ENCODE measurements at regions of chr20 and their contacts with region 1.

Region 1: GRCh38 chr20:39592371-39592770 is 630.2 kb downstream of the DHX35 start:
- DNase-seq: no peak
- ATAC-seq: no peak
- H3K4me3 Mint-ChIP-seq: no peak overlapping the region
- H3K27ac Mint-ChIP-seq: no peak overlapping the region
- H3K4me1 Mint-ChIP-seq: no peaks in the 10 kb centered on the region
- H3K27me3 Mint-ChIP-seq: peaks cover 8% of the 10 kb centered on the region

Region 2: DNA sequence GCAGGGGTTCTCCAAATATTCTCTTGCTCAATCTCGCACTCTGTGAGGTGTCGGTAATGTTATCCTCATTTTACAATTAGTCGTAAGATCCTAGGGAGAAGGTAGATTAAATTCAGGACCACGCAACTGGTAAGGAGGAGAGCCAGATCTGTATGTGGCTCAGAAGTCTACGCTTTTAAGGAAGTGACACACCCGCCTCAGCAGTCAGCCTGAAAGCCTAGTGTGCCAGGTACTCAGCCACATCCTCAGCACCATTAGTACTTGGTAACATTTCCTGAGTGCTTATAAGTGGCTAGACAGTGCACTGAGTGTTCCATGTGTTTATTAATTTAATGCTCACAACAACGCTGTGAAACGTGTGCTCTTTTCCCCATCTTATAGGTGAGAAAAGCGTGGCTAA is 566.5 kb before region 1 on chr20:
- CTCF ChIA-PET with region 1: no interaction called
- POLR2A ChIA-PET with region 1: no interaction called
- intact Hi-C with region 1: no loop called
- DNase-seq: peak; percentile 41
- ATAC-seq: peak; percentile 83
- H3K4me3 Mint-ChIP-seq: no peak overlapping the region
- H3K27ac Mint-ChIP-seq: peak overlapping the region; percentile 20
- H3K4me1 Mint-ChIP-seq: peaks cover 28% of the 10 kb centered on the region
- H3K27me3 Mint-ChIP-seq: no peaks in the 10 kb centered on the region

Region 3: DNA sequence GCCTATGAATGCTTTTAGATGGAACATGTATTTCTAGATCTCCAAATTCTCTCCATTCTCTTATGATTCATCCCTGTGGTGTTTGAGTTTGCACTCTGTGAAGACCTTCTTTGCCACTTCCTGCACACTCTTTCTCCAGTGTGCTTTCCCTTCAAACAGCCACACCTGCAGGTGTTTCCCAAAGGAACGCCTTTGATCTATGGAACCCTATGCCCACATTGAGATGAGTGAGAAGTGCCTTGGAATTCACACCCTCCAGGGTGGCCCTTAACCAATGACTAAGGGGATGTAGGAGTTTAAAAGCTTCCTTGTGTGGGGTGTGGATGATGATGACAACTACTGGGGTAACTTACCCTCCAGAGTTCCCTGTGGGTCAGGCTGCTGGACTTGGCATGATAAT is 60.2 kb before region 1 on chr20:
- CTCF ChIA-PET with region 1: no interaction called
- POLR2A ChIA-PET with region 1: no interaction called
- intact Hi-C with region 1: loop called in 1 of 2 experiments (anchors 10 kb)
- DNase-seq: no peak
- ATAC-seq: no peak
- H3K4me3 Mint-ChIP-seq: no peak overlapping the region
- H3K27ac Mint-ChIP-seq: no peak overlapping the region
- H3K4me1 Mint-ChIP-seq: no peaks in the 10 kb centered on the region
- H3K27me3 Mint-ChIP-seq: peaks cover under 1% of the 10 kb centered on the region